Activated T-helper 2 cell treated with anti-CD3 and anti-CD28 coated beads, Interferon-gamma antibody, Interleukin-2, Interleukin-4, amounts not matched to agents 10 μg/mL and 5 μg/mL and 100 μg/mL, durations not matched to agents 14 hours and 24 hours and 36 hours (primary cell): ENCODE measurements at regions of chr3 and their contacts with region 1.

Region 1: GRCh38 chr3:94062431-94063404 is at the starts of genes DHFR2 and NSUN3:
- DNase-seq: peak; percentile 83
- H3K4me3 Mint-ChIP-seq: peak within 1 kb of the TSS; percentile 97
- H3K27ac Mint-ChIP-seq: peak within 1 kb of the TSS; percentile 98
- H3K4me1 Mint-ChIP-seq: peaks cover 42% of the 10 kb centered on the region
- H3K27me3 Mint-ChIP-seq: no peaks in the 10 kb centered on the region
- total RNA-seq, gene DHFR2: 10.0 and 11.1 TPM in 2 replicates
- total RNA-seq, gene NSUN3: 20.4 and 21.4 TPM in 2 replicates

Region 2: DNA sequence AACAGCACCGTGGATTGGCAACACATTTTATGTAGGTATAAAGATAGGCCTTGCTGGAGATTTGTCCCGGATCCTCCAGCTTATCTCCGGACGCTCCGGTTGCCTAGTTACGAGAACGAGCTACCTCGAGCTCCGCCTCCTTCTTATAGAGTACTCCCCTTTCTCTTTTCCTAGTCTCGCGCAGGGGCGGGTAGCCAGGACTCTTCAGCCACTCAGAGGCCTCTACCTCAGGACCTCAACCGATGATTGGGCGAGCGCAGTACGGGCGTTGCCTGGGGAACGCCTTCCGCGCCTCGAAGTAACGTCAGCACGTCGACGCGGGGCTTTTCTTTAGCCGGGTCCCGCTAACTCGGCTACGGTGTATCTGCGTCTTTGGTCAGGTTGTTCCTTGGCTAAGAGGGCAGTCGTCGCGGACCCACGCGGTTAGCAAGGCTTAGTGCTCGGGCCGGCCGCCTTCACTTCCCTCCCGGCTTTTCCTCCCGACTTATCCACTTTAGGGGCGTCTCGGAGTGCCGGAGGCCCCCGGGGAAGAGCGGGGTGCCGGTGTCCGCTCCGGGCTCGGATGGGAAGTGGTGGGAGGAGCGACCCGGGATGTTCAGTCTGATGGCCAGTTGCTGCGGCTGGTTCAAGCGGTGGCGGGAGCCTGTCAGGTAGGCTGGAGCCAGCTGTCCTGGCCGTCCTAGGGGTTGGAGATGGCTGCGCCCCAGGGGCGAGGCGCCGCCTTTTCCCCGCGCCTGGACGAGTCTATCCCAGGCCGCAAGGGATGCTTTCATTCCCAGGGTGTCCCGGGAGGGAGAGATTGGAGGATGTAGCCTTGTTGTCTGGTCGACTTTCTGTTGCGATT is 82.7 kb before region 1 on chr3 and contains the start of gene ARL13B:
- intact Hi-C with region 1: loop called (anchors 1 kb)
- DNase-seq: peak; percentile 93
- H3K4me3 Mint-ChIP-seq: peak within 1 kb of the TSS; percentile 87
- H3K27ac Mint-ChIP-seq: peak within 1 kb of the TSS; percentile 65
- H3K4me1 Mint-ChIP-seq: peaks cover 16% of the 10 kb centered on the region
- H3K27me3 Mint-ChIP-seq: peaks cover 4% of the 10 kb centered on the region
- total RNA-seq, gene ARL13B: 13.4 and 17.4 TPM in 2 replicates